BJ (cell line): ENCODE measurements at regions of chr1 and their contacts with region 1.

Region 1: DNA sequence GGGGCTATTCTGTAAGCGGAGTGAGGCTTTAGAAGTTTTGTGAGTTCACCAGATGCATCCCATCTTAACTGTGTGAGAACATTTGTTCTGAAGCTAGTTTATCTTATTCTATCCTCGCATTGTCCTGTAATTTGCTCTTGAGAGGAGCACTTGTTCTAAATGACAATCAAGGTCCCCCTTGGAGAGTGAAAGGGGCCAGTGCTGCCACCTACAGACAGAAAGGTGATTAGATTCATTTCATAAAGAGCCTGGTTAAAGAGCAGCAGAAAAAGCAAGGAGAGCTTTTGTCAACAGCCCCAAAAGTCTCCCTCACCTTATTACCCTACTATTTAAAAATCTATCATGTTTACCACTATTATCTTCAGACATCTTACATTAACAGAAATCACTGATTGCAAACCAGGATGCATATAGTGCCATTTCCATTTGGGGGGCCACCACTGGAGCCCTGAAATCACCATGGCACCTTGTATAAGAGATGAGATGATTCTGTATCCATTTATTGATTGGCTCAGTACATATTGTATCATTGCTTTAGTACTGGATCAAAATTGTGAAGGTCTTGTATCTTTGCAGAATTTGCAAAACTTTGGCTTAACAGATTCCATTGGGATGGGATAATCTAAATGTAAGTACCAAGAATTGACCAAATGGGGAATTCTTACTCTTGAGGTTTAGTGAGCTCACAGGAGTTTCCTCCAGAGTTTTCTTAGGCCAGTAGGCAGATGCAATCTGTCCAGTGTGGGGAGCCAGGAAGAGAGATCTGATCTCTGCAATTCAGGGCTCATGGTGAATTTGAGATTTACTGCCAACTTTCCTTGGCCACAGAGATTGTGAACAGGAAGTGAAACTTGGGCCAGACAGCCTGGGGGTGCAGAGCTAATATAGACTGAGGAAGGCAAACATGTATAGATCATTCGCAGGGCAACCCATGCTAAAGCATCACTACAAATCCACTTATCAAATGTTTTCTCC is 64.3 kb upstream of the TRABD2B start:
- DNase-seq: no peak
- H3K4me3 ChIP-seq: no peak overlapping the region
- H3K27me3 ChIP-seq: no peaks in the 10 kb centered on the region
- CTCF ChIP-seq: peak; percentile 65

Region 2: GRCh38 chr1:47934243-47934805 is 127.1 kb before region 1 on chr1:
- CTCF ChIA-PET with region 1: no interaction called
- POLR2A ChIA-PET with region 1: no interaction called
- DNase-seq: no peak
- H3K4me3 ChIP-seq: no peak overlapping the region
- H3K27me3 ChIP-seq: no peaks in the 10 kb centered on the region
- CTCF ChIP-seq: no peak

Region 3: GRCh38 chr1:48049823-48050520 is 11.5 kb before region 1 on chr1:
- CTCF ChIA-PET with region 1: interaction called, 18 read pairs
- POLR2A ChIA-PET with region 1: no interaction called
- DNase-seq: no peak
- H3K4me3 ChIP-seq: no peak overlapping the region
- H3K27me3 ChIP-seq: no peaks in the 10 kb centered on the region
- CTCF ChIP-seq: no peak

Region 4: GRCh38 chr1:48362894-48363293 is 301.4 kb after region 1 on chr1:
- CTCF ChIA-PET with region 1: no interaction called
- POLR2A ChIA-PET with region 1: no interaction called
- DNase-seq: no peak
- H3K4me3 ChIP-seq: no peak overlapping the region
- H3K27me3 ChIP-seq: no peaks in the 10 kb centered on the region
- CTCF ChIP-seq: no peak